Head of caudate nucleus (tissue), 42 donors: ENCODE measurements at regions of chr9 and their contacts with region 1.

Region 1: DNA sequence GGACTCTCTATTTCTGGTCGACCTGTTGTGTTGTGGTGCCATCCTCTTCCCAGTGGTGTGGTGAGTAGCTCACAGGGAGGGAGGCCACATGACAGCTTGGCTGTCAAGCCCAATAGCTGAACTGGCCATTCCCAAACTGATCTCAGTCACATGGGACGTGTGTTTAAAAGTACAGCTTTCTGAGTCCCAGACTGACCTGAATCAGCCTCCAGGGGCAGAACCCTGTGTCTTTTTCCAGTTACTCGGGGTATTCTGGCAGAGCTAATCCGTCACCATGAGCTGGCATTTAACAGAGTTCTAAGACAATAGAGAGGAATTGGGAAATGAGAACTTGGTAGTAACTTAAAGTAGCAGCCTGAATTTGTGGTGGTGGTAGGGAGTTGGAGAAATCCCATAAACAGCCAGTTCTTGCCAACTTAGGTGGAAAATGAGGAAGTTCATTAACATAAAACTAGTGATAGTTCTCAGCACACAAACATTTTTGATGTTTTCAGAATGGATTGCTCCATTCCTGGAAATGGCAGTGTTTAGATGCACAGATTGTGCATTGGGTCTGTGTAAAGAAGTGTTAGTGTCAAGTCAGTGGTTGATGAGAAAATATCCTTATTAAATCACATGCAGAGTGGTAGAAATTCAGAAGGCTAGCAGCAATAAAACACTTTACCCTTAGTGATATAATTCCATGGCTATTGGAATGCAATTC is 50.9 kb downstream of the GPR107 start:
- DNase-seq: peak in 4 of 42 donors; percentile 12 to 65 (median 34)

Region 2: GRCh38 chr9:129875181-129875611 is 229.4 kb before region 1 on chr9:
- intact Hi-C with region 1: loop called (anchors 5 kb)
- DNase-seq: no peak